PC-9 (cell line): ENCODE measurements at regions of chr6 and their contacts with region 1.

Region 1: GRCh38 chr6:148263010-148263409 is 79.6 kb upstream of the SASH1 start:
- DNase-seq: peak; percentile 65 to 91
- H3K4me3 ChIP-seq: peak overlapping the region; percentile 30; the same call in 1 of the 2 replicates
- H3K27ac ChIP-seq: peak overlapping the region; percentile 91
- H3K4me1 ChIP-seq: peaks cover 48% of the 10 kb centered on the region
- H3K27me3 ChIP-seq: no peaks in the 10 kb centered on the region
- CTCF ChIP-seq: no peak

Region 2: DNA sequence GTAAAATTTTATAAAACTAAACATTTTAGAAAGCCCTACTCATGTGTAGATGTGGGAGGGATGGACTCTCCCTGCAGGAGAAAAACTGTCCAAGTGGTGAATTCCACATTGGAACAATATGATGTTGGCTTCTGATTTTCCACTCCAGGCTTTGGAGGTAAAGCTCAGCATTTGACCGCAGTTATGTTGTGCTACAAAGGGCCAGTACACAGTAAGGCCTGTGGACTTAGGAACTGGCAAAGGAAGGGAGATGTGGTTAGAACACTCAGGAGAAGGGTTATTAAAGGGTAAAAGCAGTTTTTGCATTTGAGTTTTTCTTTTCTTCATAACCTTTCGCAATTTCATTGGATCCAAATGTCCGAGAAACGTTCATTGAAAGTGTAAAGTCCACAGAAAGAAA is 70.7 kb before region 1 on chr6:
- CTCF ChIA-PET with region 1: no interaction called
- POLR2A ChIA-PET with region 1: no interaction called
- intact Hi-C with region 1: loop called (anchors 1 kb)
- DNase-seq: peak in 1 of 2 experiments; percentile 68
- H3K4me3 ChIP-seq: peak overlapping the region; percentile 47; the same call in 1 of the 2 replicates
- H3K27ac ChIP-seq: peak overlapping the region; percentile 99
- H3K4me1 ChIP-seq: peaks cover 53% of the 10 kb centered on the region
- H3K27me3 ChIP-seq: no peaks in the 10 kb centered on the region
- CTCF ChIP-seq: no peak

Region 3: DNA sequence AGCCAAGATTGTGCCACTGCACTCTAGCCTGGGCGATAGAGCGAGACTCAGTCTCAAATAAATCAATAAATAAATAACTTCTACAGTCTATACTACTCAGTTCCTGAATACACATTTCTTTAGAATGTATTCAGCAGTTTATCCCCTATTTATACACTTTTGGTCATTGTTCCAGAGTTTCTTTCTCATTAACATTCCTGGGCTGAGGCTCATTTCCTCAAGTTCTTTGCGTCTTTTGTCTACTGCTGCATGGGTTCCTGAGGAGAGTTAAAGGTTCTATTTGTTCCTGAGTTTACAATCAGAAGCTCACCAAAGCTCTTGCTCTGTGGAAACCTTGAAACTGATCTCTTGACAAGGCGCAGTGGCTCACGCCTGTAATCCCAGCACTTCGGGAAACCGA is 42.0 kb after region 1 on chr6:
- CTCF ChIA-PET with region 1: no interaction called
- POLR2A ChIA-PET with region 1: no interaction called
- intact Hi-C with region 1: loop called (anchors 1 kb)
- DNase-seq: no peak
- H3K4me3 ChIP-seq: no peak overlapping the region
- H3K27ac ChIP-seq: no peak overlapping the region
- H3K4me1 ChIP-seq: peaks cover 34% of the 10 kb centered on the region
- H3K27me3 ChIP-seq: no peaks in the 10 kb centered on the region
- CTCF ChIP-seq: no peak

Region 4: GRCh38 chr6:148342357-148343046 is 79.5 kb after region 1 on chr6 and contains the start of gene SASH1:
- CTCF ChIA-PET with region 1: no interaction called
- POLR2A ChIA-PET with region 1: interaction called, 5 read pairs
- intact Hi-C with region 1: loop called (anchors 1 kb)
- DNase-seq: peak; percentile 45 to 84
- H3K4me3 ChIP-seq: peak within 1 kb of the TSS; percentile 79
- H3K27ac ChIP-seq: peak within 1 kb of the TSS; percentile 85
- H3K4me1 ChIP-seq: peaks cover 36% of the 10 kb centered on the region
- H3K27me3 ChIP-seq: no peaks in the 10 kb centered on the region
- CTCF ChIP-seq: no peak
- total RNA-seq, gene SASH1: 32.9 and 35.5 TPM in 2 replicates

Region 5: GRCh38 chr6:148407372-148407771 is 144.4 kb after region 1 on chr6:
- CTCF ChIA-PET with region 1: no interaction called
- POLR2A ChIA-PET with region 1: no interaction called
- intact Hi-C with region 1: loop called (anchors 10 kb)
- DNase-seq: peak; percentile 9 to 86
- H3K4me3 ChIP-seq: no peak overlapping the region
- H3K27ac ChIP-seq: peak overlapping the region; percentile 47
- H3K4me1 ChIP-seq: peaks cover 45% of the 10 kb centered on the region
- H3K27me3 ChIP-seq: no peaks in the 10 kb centered on the region
- CTCF ChIP-seq: no peak

Region 6: DNA sequence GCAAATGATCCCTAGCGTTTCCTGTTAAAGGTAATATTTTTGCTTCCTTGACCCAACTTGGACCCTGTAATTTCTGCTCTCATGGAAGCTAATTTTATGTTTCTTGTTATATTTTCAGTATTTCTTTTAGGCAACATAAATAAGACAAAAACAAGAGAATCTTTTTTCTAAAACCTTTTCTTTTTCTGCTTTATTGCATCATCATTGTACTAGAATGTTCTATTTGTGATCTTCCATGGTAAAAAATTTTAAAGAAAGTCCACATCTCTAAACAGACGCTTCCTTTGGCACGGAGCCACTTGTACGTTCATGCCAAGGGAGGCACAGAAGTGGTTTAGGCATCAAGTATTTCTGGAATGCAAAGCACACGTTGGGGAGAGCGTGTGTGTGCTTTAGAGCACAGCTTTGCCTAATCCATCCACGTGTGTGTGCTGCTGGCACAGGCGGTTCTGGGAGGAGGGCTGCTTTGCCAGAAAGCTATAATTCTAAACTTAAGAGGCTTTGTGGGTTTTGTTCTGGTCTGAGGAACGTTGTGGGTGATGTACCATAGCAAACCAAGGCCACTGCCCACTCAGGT is 178.0 kb after region 1 on chr6:
- CTCF ChIA-PET with region 1: no interaction called
- POLR2A ChIA-PET with region 1: no interaction called
- intact Hi-C with region 1: loop called (anchors 1 kb)
- DNase-seq: peak; percentile 59 to 91
- H3K4me3 ChIP-seq: no peak overlapping the region
- H3K27ac ChIP-seq: peak overlapping the region; percentile 85
- H3K4me1 ChIP-seq: peaks cover 58% of the 10 kb centered on the region
- H3K27me3 ChIP-seq: no peaks in the 10 kb centered on the region
- CTCF ChIP-seq: no peak

Region 7: GRCh38 chr6:148464319-148465010 is 201.5 kb after region 1 on chr6:
- CTCF ChIA-PET with region 1: no interaction called
- POLR2A ChIA-PET with region 1: no interaction called
- intact Hi-C with region 1: loop called (anchors 1 kb)
- DNase-seq: peak; percentile 53 to 63
- H3K4me3 ChIP-seq: no peak overlapping the region
- H3K27ac ChIP-seq: no peak overlapping the region
- H3K4me1 ChIP-seq: peaks cover 7% of the 10 kb centered on the region
- H3K27me3 ChIP-seq: no peaks in the 10 kb centered on the region
- CTCF ChIP-seq: peak; percentile 96